GM10248 (cell line): ENCODE measurements at regions of chr5 and their contacts with region 1.

Region 1: GRCh38 chr5:178249191-178249989 is 16.8 kb upstream of the PHYKPL start:
- DNase-seq: no peak
- CTCF ChIP-seq: no peak

Region 2: GRCh38 chr5:178234750-178235587 is 14.4 kb before region 1 on chr5:
- CTCF ChIA-PET with region 1: interaction called, 18 read pairs
- POLR2A ChIA-PET with region 1: no interaction called
- DNase-seq: peak; percentile 81
- CTCF ChIP-seq: peak; percentile 85

Region 3: GRCh38 chr5:178271726-178272479 is 22.5 kb after region 1 on chr5:
- CTCF ChIA-PET with region 1: no interaction called
- POLR2A ChIA-PET with region 1: no interaction called
- DNase-seq: no peak
- CTCF ChIP-seq: no peak